Right cardiac atrium (tissue), 5 donors: ENCODE measurements at regions of chr1 and their contacts with region 1.

Region 1: GRCh38 chr1:156129706-156130581 is 15.4 kb downstream of the LMNA start:
- DNase-seq: peak; percentile 91 to 94 (median 91)
- ATAC-seq: peak; percentile 72 to 74
- H3K4me3 ChIP-seq: no peak overlapping the region
- H3K27ac ChIP-seq: peak overlapping the region; percentile 96
- H3K4me1 ChIP-seq: peaks cover 32% of the 10 kb centered on the region
- H3K27me3 ChIP-seq: no peaks in the 10 kb centered on the region

Region 2: GRCh38 chr1:156096640-156097391 is 33.1 kb before region 1 on chr1:
- intact Hi-C with region 1: loop called (anchors 2 to 5 kb)
- DNase-seq: peak; percentile 92 to 98 (median 97)
- ATAC-seq: peak; percentile 95
- H3K4me3 ChIP-seq: no peak overlapping the region
- H3K27ac ChIP-seq: peak overlapping the region; percentile 83
- H3K4me1 ChIP-seq: peaks cover 11% of the 10 kb centered on the region
- H3K27me3 ChIP-seq: no peaks in the 10 kb centered on the region

Region 3: GRCh38 chr1:156198831-156199349 is 68.9 kb after region 1 on chr1:
- intact Hi-C with region 1: no loop called
- DNase-seq: no peak
- ATAC-seq: no peak
- H3K4me3 ChIP-seq: no peak overlapping the region
- H3K27ac ChIP-seq: no peak overlapping the region
- H3K4me1 ChIP-seq: peaks cover 8% of the 10 kb centered on the region
- H3K27me3 ChIP-seq: no peaks in the 10 kb centered on the region